ENCODE measurements at regions of chr4 and their contacts with region 1.

Region 1: GRCh38 chr4:77819843-77820648 is 878 bp upstream of the CNOT6L start:
- DNase-seq: peak; percentile 90 to 98 (median 95)
- ATAC-seq: peak; percentile 74 to 81 (median 76)
- H3K4me3 ChIP-seq: peak overlapping the region; percentile 83 to 96
- H3K4me3 Mint-ChIP-seq: peak overlapping the region; percentile 97 to 100 (median 98)
- H3K27ac ChIP-seq: peak overlapping the region; percentile 98
- H3K27ac Mint-ChIP-seq: peak overlapping the region; percentile 98 to 99
- H3K4me1 ChIP-seq: peaks cover 41 to 48% of the 10 kb centered on the region in 2 experiments
- H3K4me1 Mint-ChIP-seq: peaks cover 60 to 70% (median 60%) of the 10 kb centered on the region in 3 donors
- H3K27me3 ChIP-seq: no peaks in the 10 kb centered on the region
- H3K27me3 Mint-ChIP-seq: no peaks in the 10 kb centered on the region

Region 2: GRCh38 chr4:77305766-77306165 is 514.3 kb before region 1 on chr4:
- CTCF ChIA-PET with region 1: no interaction called
- POLR2A ChIA-PET with region 1: no interaction called
- DNase-seq: no peak
- ATAC-seq: no peak
- H3K4me3 ChIP-seq: no peak overlapping the region
- H3K4me3 Mint-ChIP-seq: no peak overlapping the region
- H3K27ac ChIP-seq: no peak overlapping the region
- H3K27ac Mint-ChIP-seq: no peak overlapping the region
- H3K4me1 ChIP-seq: no peaks in the 10 kb centered on the region
- H3K4me1 Mint-ChIP-seq: peaks cover 0 to 3% (median under 1%) of the 10 kb centered on the region in 3 donors
- H3K27me3 ChIP-seq: peaks cover 0 to 8% of the 10 kb centered on the region in 2 experiments
- H3K27me3 Mint-ChIP-seq: peaks cover 3 to 15% of the 10 kb centered on the region in 2 donors

Region 3: DNA sequence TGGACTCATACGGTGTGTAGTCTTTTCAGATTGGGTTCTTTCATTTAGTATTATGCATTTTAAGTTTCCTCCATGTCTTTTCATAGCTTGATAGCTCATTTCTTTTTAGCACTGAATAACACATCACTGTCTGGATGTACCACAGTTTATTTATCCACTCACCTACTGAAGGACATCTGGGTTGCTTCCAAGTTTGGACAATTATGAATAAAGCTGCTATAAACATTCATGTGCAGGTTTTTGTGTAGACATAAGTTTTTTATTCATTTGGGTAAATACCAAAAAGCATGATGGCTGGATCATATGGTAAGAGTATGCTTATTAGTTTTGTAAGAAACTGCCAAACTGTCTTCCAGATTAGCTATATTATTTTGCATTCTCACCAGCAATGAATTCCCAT is 29.9 kb before region 1 on chr4:
- CTCF ChIA-PET with region 1: interaction called in 1 of 2 experiments, 4 read pairs
- POLR2A ChIA-PET with region 1: interaction called, 3 to 15 read pairs
- DNase-seq: no peak
- ATAC-seq: no peak
- H3K4me3 ChIP-seq: no peak overlapping the region
- H3K4me3 Mint-ChIP-seq: peak overlapping the region; percentile 0 to 51 (median 44)
- H3K27ac ChIP-seq: no peak overlapping the region
- H3K27ac Mint-ChIP-seq: peak overlapping the region; percentile 50 to 72
- H3K4me1 ChIP-seq: peaks cover 27 to 52% of the 10 kb centered on the region in 2 experiments
- H3K4me1 Mint-ChIP-seq: peaks cover 76 to 84% (median 83%) of the 10 kb centered on the region in 3 donors
- H3K27me3 ChIP-seq: no peaks in the 10 kb centered on the region
- H3K27me3 Mint-ChIP-seq: no peaks in the 10 kb centered on the region

Region 4: GRCh38 chr4:77800483-77801259 is 19.4 kb before region 1 on chr4:
- CTCF ChIA-PET with region 1: interaction called in 1 of 2 experiments, 11 read pairs
- POLR2A ChIA-PET with region 1: interaction called, 20 to 35 read pairs
- DNase-seq: no peak
- ATAC-seq: peak; percentile 13 to 55 (median 44)
- H3K4me3 ChIP-seq: peak overlapping the region; percentile 19 to 25
- H3K4me3 Mint-ChIP-seq: peak overlapping the region; percentile 58 to 73 (median 60)
- H3K27ac ChIP-seq: peak overlapping the region; percentile 70
- H3K27ac Mint-ChIP-seq: peak overlapping the region; percentile 63 to 85
- H3K4me1 ChIP-seq: peaks cover 40 to 48% of the 10 kb centered on the region in 2 experiments
- H3K4me1 Mint-ChIP-seq: peaks cover 88 to 91% (median 90%) of the 10 kb centered on the region in 3 donors
- H3K27me3 ChIP-seq: no peaks in the 10 kb centered on the region
- H3K27me3 Mint-ChIP-seq: no peaks in the 10 kb centered on the region

Region 5: GRCh38 chr4:77805802-77806201 is 14.2 kb before region 1 on chr4:
- CTCF ChIA-PET with region 1: interaction called, 7 to 11 read pairs
- POLR2A ChIA-PET with region 1: interaction called, 20 to 38 read pairs
- DNase-seq: no peak
- ATAC-seq: no peak
- H3K4me3 ChIP-seq: no peak overlapping the region
- H3K4me3 Mint-ChIP-seq: peak overlapping the region in 2 of 3 donors; percentile 18 to 28
- H3K27ac ChIP-seq: no peak overlapping the region
- H3K27ac Mint-ChIP-seq: peak overlapping the region; percentile 78 to 83
- H3K4me1 ChIP-seq: peaks cover 20 to 44% of the 10 kb centered on the region in 2 experiments
- H3K4me1 Mint-ChIP-seq: peaks cover 84 to 91% (median 90%) of the 10 kb centered on the region in 3 donors
- H3K27me3 ChIP-seq: no peaks in the 10 kb centered on the region
- H3K27me3 Mint-ChIP-seq: no peaks in the 10 kb centered on the region

Region 6: GRCh38 chr4:77852892-77853495 is 32.9 kb after region 1 on chr4:
- CTCF ChIA-PET with region 1: interaction called, 3 to 12 read pairs
- POLR2A ChIA-PET with region 1: interaction called, 13 to 24 read pairs
- DNase-seq: peak; percentile 33 to 90 (median 74)
- ATAC-seq: peak; percentile 86 to 90 (median 88)
- H3K4me3 ChIP-seq: peak overlapping the region in 1 of 2 donors; percentile 19
- H3K4me3 Mint-ChIP-seq: peak overlapping the region; percentile 54 to 84 (median 64)
- H3K27ac ChIP-seq: peak overlapping the region; percentile 97
- H3K27ac Mint-ChIP-seq: peak overlapping the region; percentile 98 to 99
- H3K4me1 ChIP-seq: peaks cover 43 to 46% of the 10 kb centered on the region in 2 experiments
- H3K4me1 Mint-ChIP-seq: peaks cover 61 to 65% (median 63%) of the 10 kb centered on the region in 3 donors
- H3K27me3 ChIP-seq: no peaks in the 10 kb centered on the region
- H3K27me3 Mint-ChIP-seq: no peaks in the 10 kb centered on the region

Region 7: GRCh38 chr4:77862478-77863216 is 42.6 kb after region 1 on chr4 and contains the start of gene MRPL1:
- CTCF ChIA-PET with region 1: interaction called, 7 to 26 read pairs
- POLR2A ChIA-PET with region 1: interaction called, 12 to 79 read pairs
- DNase-seq: peak; percentile 70 to 95 (median 86)
- ATAC-seq: peak; percentile 79 to 88 (median 85)
- H3K4me3 ChIP-seq: peak within 1 kb of the TSS; percentile 78 to 92
- H3K4me3 Mint-ChIP-seq: peak within 1 kb of the TSS; percentile 91 to 93 (median 92)
- H3K27ac ChIP-seq: peak within 1 kb of the TSS; percentile 99
- H3K27ac Mint-ChIP-seq: peak within 1 kb of the TSS; percentile 99
- H3K4me1 ChIP-seq: peaks cover 27 to 39% of the 10 kb centered on the region in 2 experiments
- H3K4me1 Mint-ChIP-seq: peaks cover 67 to 71% (median 70%) of the 10 kb centered on the region in 3 donors
- H3K27me3 ChIP-seq: no peaks in the 10 kb centered on the region
- H3K27me3 Mint-ChIP-seq: peaks cover 0 to 1% of the 10 kb centered on the region in 2 donors
- total RNA-seq, gene MRPL1: 16.9 to 27.2 (median 21.0) TPM

Region 8: GRCh38 chr4:78310022-78310741 is 490.1 kb after region 1 on chr4:
- CTCF ChIA-PET with region 1: no interaction called
- POLR2A ChIA-PET with region 1: no interaction called
- DNase-seq: no peak
- ATAC-seq: no peak
- H3K4me3 ChIP-seq: no peak overlapping the region
- H3K4me3 Mint-ChIP-seq: no peak overlapping the region
- H3K27ac ChIP-seq: no peak overlapping the region
- H3K27ac Mint-ChIP-seq: no peak overlapping the region
- H3K4me1 ChIP-seq: no peaks in the 10 kb centered on the region
- H3K4me1 Mint-ChIP-seq: no peaks in the 10 kb centered on the region
- H3K27me3 ChIP-seq: no peaks in the 10 kb centered on the region
- H3K27me3 Mint-ChIP-seq: peaks cover 5 to 30% of the 10 kb centered on the region in 2 donors